ENCODE measurements at regions of chr13 and their contacts with region 1.

Region 1: DNA sequence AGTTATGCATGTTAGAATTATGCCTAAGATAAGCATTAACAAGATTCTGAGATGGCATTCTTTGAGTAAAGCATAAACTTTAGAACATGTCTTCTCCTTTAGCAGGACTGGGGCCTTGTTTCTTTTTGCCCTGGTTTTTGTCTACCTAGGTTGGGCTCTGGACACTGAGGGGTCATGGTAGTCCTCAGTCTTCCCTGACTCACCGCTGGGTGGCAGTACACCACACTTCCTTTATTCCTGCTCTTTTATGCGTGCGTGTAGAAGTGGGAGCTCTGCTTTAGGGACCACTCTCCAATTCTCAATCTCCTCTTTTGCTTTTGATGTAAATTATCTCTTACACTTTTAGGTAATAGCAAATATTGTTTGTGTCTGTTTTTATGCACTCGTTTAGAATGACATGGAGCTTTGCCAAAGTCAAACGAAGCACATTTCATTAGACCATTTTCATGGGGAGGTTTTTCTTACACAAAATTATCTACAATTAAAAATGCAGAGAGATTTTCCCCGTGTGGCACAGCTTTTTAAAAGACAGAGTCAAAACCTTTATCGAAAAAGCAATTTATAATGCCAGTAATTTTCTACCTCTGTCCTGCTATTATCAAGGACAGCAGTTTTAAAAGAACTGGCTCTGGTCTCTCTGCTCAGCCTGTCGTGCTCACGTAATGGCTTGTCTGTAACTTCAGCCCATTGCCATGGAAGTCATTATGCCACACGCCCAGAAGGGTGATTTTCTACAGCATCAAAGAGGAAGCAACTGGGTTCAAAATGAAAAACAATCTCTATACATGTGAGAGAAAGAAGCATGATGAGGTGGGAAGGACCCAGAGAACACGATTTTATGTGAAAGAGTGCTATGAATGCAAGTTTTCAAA is 413.9 kb downstream of the COG6 start:
- DNase-seq: peak; percentile 71 to 76
- H3K4me3 ChIP-seq: no peak overlapping the region
- H3K4me3 Mint-ChIP-seq: no peak overlapping the region
- H3K27ac Mint-ChIP-seq: no peak overlapping the region
- H3K4me1 ChIP-seq: peaks cover 8% of the 10 kb centered on the region
- H3K4me1 Mint-ChIP-seq: peaks cover 4% of the 10 kb centered on the region
- H3K27me3 ChIP-seq: no peaks in the 10 kb centered on the region
- H3K27me3 Mint-ChIP-seq: no peaks in the 10 kb centered on the region
- CTCF ChIP-seq: peak; percentile 82 to 87

Region 2: GRCh38 chr13:39779337-39780265 is 289.8 kb before region 1 on chr13:
- CTCF ChIA-PET with region 1: no interaction called
- POLR2A ChIA-PET with region 1: no interaction called
- intact Hi-C with region 1: loop called (anchors 10 kb)
- DNase-seq: no peak
- H3K4me3 ChIP-seq: no peak overlapping the region
- H3K4me3 Mint-ChIP-seq: no peak overlapping the region
- H3K27ac Mint-ChIP-seq: no peak overlapping the region
- H3K4me1 ChIP-seq: no peaks in the 10 kb centered on the region
- H3K4me1 Mint-ChIP-seq: peaks cover 7% of the 10 kb centered on the region
- H3K27me3 ChIP-seq: no peaks in the 10 kb centered on the region
- H3K27me3 Mint-ChIP-seq: peaks cover 2% of the 10 kb centered on the region
- CTCF ChIP-seq: no peak

Region 3: DNA sequence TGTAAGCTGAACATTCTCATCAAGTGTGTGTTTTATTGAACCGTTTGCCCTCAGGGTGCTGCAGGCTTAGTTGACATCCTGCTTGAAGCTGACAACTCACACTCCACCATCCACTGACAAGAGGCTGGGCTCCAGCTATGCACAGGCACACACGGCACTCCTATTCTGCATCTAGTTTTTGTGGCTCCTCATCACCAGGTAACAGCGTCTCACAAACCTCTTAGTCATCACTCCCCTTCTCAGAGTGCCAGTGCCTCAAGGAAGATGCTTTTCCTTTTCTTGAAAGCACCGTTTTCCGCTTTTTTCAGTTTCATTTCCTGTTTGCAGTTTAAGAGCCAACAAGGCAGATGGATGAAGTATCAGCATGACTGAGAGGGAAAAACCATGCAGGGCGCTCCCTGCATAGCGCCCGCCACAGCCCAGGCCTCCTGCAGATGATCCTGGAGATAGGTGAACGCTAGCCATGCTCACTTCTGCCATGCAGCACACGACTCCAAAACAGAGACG is 77.3 kb after region 1 on chr13:
- CTCF ChIA-PET with region 1: interaction called, 3 read pairs
- POLR2A ChIA-PET with region 1: no interaction called
- intact Hi-C with region 1: loop called (anchors 2 kb)
- DNase-seq: no peak
- H3K4me3 ChIP-seq: no peak overlapping the region
- H3K4me3 Mint-ChIP-seq: no peak overlapping the region
- H3K27ac Mint-ChIP-seq: no peak overlapping the region
- H3K4me1 ChIP-seq: 0 out of 2 replicates have a peak, but pooled peaks cover 6% of the 10 kb centered on the region
- H3K4me1 Mint-ChIP-seq: peaks cover 5% of the 10 kb centered on the region
- H3K27me3 ChIP-seq: no peaks in the 10 kb centered on the region
- H3K27me3 Mint-ChIP-seq: peaks cover 3% of the 10 kb centered on the region
- CTCF ChIP-seq: no peak

Region 4: GRCh38 chr13:40344270-40345148 is 275.1 kb after region 1 on chr13:
- CTCF ChIA-PET with region 1: no interaction called
- POLR2A ChIA-PET with region 1: no interaction called
- intact Hi-C with region 1: loop called (anchors 2 kb)
- DNase-seq: no peak
- H3K4me3 ChIP-seq: no peak overlapping the region
- H3K4me3 Mint-ChIP-seq: no peak overlapping the region
- H3K27ac Mint-ChIP-seq: peak overlapping the region; percentile 26
- H3K4me1 ChIP-seq: peaks cover 46% of the 10 kb centered on the region
- H3K4me1 Mint-ChIP-seq: peaks cover 56% of the 10 kb centered on the region
- H3K27me3 ChIP-seq: no peaks in the 10 kb centered on the region
- H3K27me3 Mint-ChIP-seq: no peaks in the 10 kb centered on the region
- CTCF ChIP-seq: no peak

Region 5: GRCh38 chr13:40589285-40590109 is 520.1 kb after region 1 on chr13:
- CTCF ChIA-PET with region 1: no interaction called
- POLR2A ChIA-PET with region 1: no interaction called
- intact Hi-C with region 1: loop called (anchors 10 kb)
- DNase-seq: no peak
- H3K4me3 ChIP-seq: no peak overlapping the region
- H3K4me3 Mint-ChIP-seq: no peak overlapping the region
- H3K27ac Mint-ChIP-seq: no peak overlapping the region
- H3K4me1 ChIP-seq: peaks cover 48% of the 10 kb centered on the region
- H3K4me1 Mint-ChIP-seq: peaks cover 34% of the 10 kb centered on the region
- H3K27me3 ChIP-seq: no peaks in the 10 kb centered on the region
- H3K27me3 Mint-ChIP-seq: no peaks in the 10 kb centered on the region
- CTCF ChIP-seq: no peak

Region 6: DNA sequence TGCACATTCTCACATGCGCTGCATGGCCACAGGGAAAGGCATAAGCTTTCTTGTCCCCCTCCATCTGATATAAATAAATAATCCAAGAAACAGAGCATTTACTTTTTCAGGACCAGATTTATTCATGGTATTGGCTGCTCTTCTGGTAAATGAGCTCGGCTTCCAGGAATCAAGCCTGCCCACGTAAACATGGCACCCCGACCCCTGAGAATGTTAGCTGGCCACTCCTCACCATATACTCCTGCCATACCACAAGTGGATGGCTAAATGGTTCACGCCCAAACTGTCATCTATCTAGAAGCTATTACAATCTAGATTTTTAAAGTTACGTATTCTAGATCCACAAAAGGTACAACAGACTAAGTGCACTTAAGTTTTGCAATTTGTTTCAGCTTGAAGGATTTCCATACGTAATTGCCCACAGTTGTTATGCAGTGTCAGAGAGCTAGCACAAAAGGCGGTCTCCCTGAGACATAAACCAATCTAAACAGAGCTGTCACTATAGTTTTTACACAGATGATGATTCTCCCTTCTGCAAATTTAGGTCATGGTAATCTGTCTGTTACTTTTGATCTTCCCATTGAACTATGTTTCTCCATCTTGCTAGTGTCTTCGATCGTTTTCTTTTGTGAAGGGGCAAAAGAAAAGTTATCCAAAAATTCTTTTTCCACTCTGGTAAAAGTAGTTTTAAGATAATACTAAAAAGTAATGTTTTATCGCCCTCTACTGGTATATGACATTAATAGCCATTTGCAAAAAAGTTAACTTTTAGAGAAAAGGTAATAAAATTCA is 613.2 kb after region 1 on chr13:
- CTCF ChIA-PET with region 1: interaction called, 7 read pairs
- POLR2A ChIA-PET with region 1: no interaction called
- intact Hi-C with region 1: loop called (anchors 1 kb)
- DNase-seq: no peak
- H3K4me3 ChIP-seq: no peak overlapping the region
- H3K4me3 Mint-ChIP-seq: no peak overlapping the region
- H3K27ac Mint-ChIP-seq: no peak overlapping the region
- H3K4me1 ChIP-seq: peaks cover 15% of the 10 kb centered on the region
- H3K4me1 Mint-ChIP-seq: peaks cover 18% of the 10 kb centered on the region
- H3K27me3 ChIP-seq: no peaks in the 10 kb centered on the region
- H3K27me3 Mint-ChIP-seq: no peaks in the 10 kb centered on the region
- CTCF ChIP-seq: peak; percentile 36 to 71

Region 7: DNA sequence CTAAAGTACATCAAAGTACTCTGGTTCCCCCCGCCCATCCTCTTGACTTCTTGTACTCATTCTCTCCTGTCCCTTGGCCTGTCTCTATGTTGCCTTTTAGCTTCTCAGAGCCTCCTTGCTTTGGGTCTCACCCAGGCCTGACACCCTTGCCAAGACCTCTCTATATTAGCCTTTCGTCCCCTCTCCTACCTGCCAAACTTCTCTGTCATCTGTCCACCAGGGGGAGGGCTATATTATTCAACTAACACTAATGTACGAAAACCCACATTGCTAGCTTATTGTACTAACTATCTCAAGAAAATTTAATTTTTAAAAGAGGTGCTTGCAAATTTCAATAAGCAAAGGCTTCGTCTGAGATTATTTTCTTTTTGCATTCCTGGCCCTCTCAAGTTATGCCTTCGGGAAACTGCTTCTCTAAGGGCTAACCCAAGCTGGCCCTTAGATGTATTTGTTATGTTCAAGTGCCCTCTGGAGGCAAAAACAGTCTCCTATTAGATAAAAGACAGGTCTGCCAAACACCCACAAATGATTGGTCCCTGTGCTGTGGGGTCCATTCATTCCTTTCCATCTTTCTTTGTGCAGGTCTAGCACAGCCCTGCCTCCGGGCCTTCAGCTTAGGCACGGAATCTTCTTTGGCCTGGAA is 707.9 kb after region 1 on chr13:
- CTCF ChIA-PET with region 1: no interaction called
- POLR2A ChIA-PET with region 1: no interaction called
- intact Hi-C with region 1: loop called (anchors 1 kb)
- DNase-seq: peak in 1 of 2 experiments; percentile 73
- H3K4me3 ChIP-seq: peak overlapping the region; percentile 28
- H3K4me3 Mint-ChIP-seq: peak overlapping the region; percentile 39
- H3K27ac Mint-ChIP-seq: no peak overlapping the region
- H3K4me1 ChIP-seq: peaks cover 19% of the 10 kb centered on the region
- H3K4me1 Mint-ChIP-seq: peaks cover 13% of the 10 kb centered on the region
- H3K27me3 ChIP-seq: no peaks in the 10 kb centered on the region
- H3K27me3 Mint-ChIP-seq: no peaks in the 10 kb centered on the region
- CTCF ChIP-seq: peak; percentile 82 to 92

Measured in Caco-2 (cell line).